Panc1 (cell line): ENCODE measurements at regions of chr2 and their contacts with region 1.

Region 1: GRCh38 chr2:69384618-69385081 is 2.4 kb downstream of the GFPT1 start:
- DNase-seq: no peak
- ATAC-seq: no peak
- H3K4me3 ChIP-seq: peak overlapping the region; percentile 53 to 94; a peak in 3 of 4 replicates
- H3K27ac ChIP-seq: peak overlapping the region; percentile 94
- H3K4me1 ChIP-seq: peaks cover 10% of the 10 kb centered on the region
- H3K27me3 ChIP-seq: no peaks in the 10 kb centered on the region
- CTCF ChIP-seq: no peak

Region 2: GRCh38 chr2:69241664-69242514 is 142.8 kb before region 1 on chr2:
- CTCF ChIA-PET with region 1: no interaction called
- POLR2A ChIA-PET with region 1: interaction called, 10 read pairs
- in situ Hi-C with region 1: no loop called
- intact Hi-C with region 1: no loop called
- DNase-seq: no peak
- ATAC-seq: no peak
- H3K4me3 ChIP-seq: no peak overlapping the region
- H3K27ac ChIP-seq: peak overlapping the region; percentile 52; the same call in 1 of the 2 replicates
- H3K4me1 ChIP-seq: no peaks in the 10 kb centered on the region
- H3K27me3 ChIP-seq: no peaks in the 10 kb centered on the region
- CTCF ChIP-seq: no peak